Posterior cingulate gyrus (tissue), 11 donors: ENCODE measurements at regions of chr4 and their contacts with region 1.

Region 1: GRCh38 chr4:57037982-57038604 is 59.4 kb downstream of the POLR2B start:
- DNase-seq: peak; percentile 47 to 94 (median 72)

Region 2: GRCh38 chr4:56229947-56230346 is 808.1 kb before region 1 on chr4:
- intact Hi-C with region 1: no loop called
- DNase-seq: no peak

Region 3: GRCh38 chr4:56940971-56941370 is 97.1 kb before region 1 on chr4:
- intact Hi-C with region 1: no loop called
- DNase-seq: no peak

Region 4: GRCh38 chr4:57158221-57158620 is 120.1 kb after region 1 on chr4:
- intact Hi-C with region 1: loop called (anchors 10 kb)
- DNase-seq: no peak